Naive thymus-derived CD4-positive, alpha-beta T cell (primary cell): ENCODE measurements at regions of chr14 and their contacts with region 1.

Region 1: GRCh38 chr14:63470962-63471793 is 72.0 kb downstream of the PPP2R5E start:
- DNase-seq: no peak
- ATAC-seq: peak; percentile 60
- H3K4me3 ChIP-seq: no peak overlapping the region
- H3K4me3 Mint-ChIP-seq: peak overlapping the region in 5 of 10 donors; percentile 2 to 60 (median 34)
- H3K27ac ChIP-seq: no peak overlapping the region
- H3K27ac Mint-ChIP-seq: peak overlapping the region in 4 of 9 donors; percentile 5 to 74 (median 38)
- H3K4me1 ChIP-seq: peaks cover 7 to 24% of the 10 kb centered on the region in 2 donors
- H3K4me1 Mint-ChIP-seq: peaks cover 32 to 58% (median 50%) of the 10 kb centered on the region in 7 donors
- H3K27me3 ChIP-seq: no peaks in the 10 kb centered on the region
- H3K27me3 Mint-ChIP-seq: no peaks in the 10 kb centered on the region

Region 2: DNA sequence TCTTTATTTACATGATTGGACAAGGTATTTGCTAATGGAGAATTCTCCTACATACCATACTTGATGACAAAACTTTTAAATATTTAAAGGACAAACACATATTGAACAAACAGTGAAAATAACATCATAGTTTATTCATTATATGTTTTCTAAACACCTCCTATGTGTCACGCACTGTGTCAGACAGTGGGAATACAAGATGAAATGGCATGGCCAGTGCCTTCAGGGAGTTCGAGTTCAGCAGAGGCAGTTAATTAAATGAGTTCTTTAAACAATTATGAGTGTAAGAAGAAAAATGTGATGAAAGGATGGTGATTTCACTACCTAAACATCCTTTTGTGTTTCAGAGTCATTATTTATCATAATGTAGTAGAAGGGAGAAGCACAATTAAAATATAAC is 585.7 kb before region 1 on chr14:
- CTCF ChIA-PET with region 1: no interaction called
- POLR2A ChIA-PET with region 1: no interaction called
- intact Hi-C with region 1: no loop called
- DNase-seq: no peak
- ATAC-seq: no peak
- H3K4me3 ChIP-seq: no peak overlapping the region
- H3K4me3 Mint-ChIP-seq: no peak overlapping the region
- H3K27ac ChIP-seq: no peak overlapping the region
- H3K27ac Mint-ChIP-seq: no peak overlapping the region
- H3K4me1 ChIP-seq: no peaks in the 10 kb centered on the region
- H3K4me1 Mint-ChIP-seq: no peaks in the 10 kb centered on the region
- H3K27me3 ChIP-seq: no peaks in the 10 kb centered on the region
- H3K27me3 Mint-ChIP-seq: no peaks in the 10 kb centered on the region

Region 3: GRCh38 chr14:63388763-63389431 is 82.3 kb before region 1 on chr14:
- CTCF ChIA-PET with region 1: no interaction called
- POLR2A ChIA-PET with region 1: no interaction called
- intact Hi-C with region 1: loop called in 1 of 2 experiments (anchors 10 kb)
- DNase-seq: peak in 8 of 9 donors; percentile 4 to 52 (median 24)
- ATAC-seq: peak; percentile 86
- H3K4me3 ChIP-seq: no peak overlapping the region
- H3K4me3 Mint-ChIP-seq: no peak overlapping the region
- H3K27ac ChIP-seq: no peak overlapping the region
- H3K27ac Mint-ChIP-seq: peak overlapping the region in 1 of 9 donors; percentile 43
- H3K4me1 ChIP-seq: no peaks in the 10 kb centered on the region
- H3K4me1 Mint-ChIP-seq: peaks cover 0 to 9% (median under 1%) of the 10 kb centered on the region in 7 donors
- H3K27me3 ChIP-seq: no peaks in the 10 kb centered on the region
- H3K27me3 Mint-ChIP-seq: no peaks in the 10 kb centered on the region